ENCODE measurements at regions of chr19 and their contacts with region 1.

Region 1: DNA sequence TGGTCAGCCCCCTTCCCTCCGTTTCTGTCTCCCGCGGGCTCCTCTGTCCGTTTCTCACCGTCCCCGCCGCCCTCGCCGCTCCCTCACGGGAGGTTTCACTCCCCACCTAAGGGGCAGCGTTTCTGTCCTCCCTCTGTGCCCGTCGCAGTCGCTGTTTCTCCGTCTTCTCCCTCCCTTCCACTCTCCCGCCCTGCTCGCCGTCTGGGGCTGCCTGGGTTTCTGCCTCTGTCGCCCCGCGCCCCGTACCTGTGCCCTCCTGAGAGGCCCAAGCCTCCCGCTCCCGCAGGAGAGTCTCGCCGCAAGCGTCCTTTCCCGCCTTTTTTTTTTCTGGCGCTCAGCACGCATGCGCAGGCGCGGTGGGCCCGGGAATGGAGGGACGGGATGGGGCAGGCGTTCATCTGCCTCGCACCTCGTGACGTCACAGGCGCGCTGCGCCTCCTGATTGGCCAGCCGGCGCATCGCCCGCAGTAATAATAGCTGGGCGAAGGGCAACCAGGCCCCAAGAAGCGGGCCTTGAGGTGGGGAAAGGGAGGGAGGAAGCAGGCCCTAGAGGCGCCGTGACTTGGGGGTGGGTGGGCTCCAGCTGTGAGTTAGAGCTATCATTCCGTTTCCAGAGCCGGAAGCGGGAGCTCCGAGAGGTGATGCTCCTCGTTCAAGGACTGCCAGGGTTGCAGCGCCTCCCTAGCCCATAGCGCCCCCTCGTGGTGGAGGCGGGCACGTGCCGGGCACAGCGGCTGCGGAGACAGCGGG is 15.4 kb downstream of the SSC5D start:
- DNase-seq: peak; percentile 97
- ATAC-seq: peak; percentile 95
- H3K4me3 Mint-ChIP-seq: peak overlapping the region; percentile 88
- H3K27ac Mint-ChIP-seq: peak overlapping the region; percentile 91
- H3K4me1 Mint-ChIP-seq: peaks cover 11% of the 10 kb centered on the region
- H3K27me3 Mint-ChIP-seq: peaks cover 3% of the 10 kb centered on the region
- CTCF ChIP-seq: peak; percentile 79

Region 2: DNA sequence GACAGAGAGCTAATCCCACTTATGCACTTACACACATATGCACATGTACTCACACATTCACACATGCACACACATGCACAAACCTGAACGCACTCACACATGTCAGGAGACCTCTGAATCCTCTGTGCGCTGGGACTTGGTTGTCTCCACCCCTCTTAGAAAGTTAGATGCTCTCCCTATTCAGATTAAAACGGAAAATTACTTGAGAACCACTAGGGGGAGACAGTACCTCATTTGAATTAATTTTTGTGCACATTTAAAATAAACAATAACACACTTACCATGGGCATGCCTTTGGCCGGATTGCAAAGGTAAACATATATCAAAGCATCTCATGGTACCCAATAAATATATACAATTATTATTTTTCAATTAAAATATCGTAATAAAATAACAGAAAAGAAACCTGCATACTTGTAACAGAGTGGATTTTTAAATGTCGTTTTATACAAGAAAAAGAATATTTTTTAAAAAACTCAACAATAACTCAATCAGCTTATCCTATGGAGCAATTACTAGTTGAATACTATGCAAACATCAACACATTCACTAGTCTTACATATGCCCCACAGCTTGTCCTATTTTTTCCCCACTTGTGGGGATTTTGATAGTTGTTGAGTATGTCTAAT is 850.4 kb before region 1 on chr19:
- CTCF ChIA-PET with region 1: no interaction called
- POLR2A ChIA-PET with region 1: no interaction called
- intact Hi-C with region 1: loop called (anchors 10 kb)
- DNase-seq: no peak
- ATAC-seq: peak; percentile 42
- H3K4me3 Mint-ChIP-seq: no peak overlapping the region
- H3K27ac Mint-ChIP-seq: no peak overlapping the region
- H3K4me1 Mint-ChIP-seq: peaks cover 12% of the 10 kb centered on the region
- H3K27me3 Mint-ChIP-seq: no peaks in the 10 kb centered on the region
- CTCF ChIP-seq: peak; percentile 88

Region 3: GRCh38 chr19:54817670-54818536 is 685.8 kb before region 1 on chr19:
- CTCF ChIA-PET with region 1: no interaction called
- POLR2A ChIA-PET with region 1: no interaction called
- intact Hi-C with region 1: no loop called
- DNase-seq: no peak
- ATAC-seq: no peak
- H3K4me3 Mint-ChIP-seq: no peak overlapping the region
- H3K27ac Mint-ChIP-seq: no peak overlapping the region
- H3K4me1 Mint-ChIP-seq: no peaks in the 10 kb centered on the region
- H3K27me3 Mint-ChIP-seq: peaks cover 22% of the 10 kb centered on the region
- CTCF ChIP-seq: no peak

Region 4: DNA sequence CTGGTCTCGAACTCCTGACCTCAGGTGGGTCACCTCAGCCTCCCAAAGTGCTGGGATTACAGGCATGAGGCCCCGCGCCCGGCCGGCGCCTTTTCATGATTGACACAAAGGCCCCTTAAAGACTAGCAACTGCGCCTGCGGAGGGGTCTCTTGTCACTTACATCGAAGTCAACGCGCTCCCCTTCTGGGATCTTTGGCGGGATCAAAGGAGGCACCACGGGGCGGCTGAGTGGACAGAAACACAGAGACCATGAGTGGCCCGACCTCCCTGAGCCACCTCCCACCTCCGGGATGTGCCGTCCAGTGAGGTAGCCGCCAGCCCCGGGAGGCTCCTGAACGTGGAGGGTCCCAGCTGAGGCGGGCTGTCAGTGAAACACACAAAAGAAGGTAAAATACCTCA is 362.0 kb before region 1 on chr19:
- CTCF ChIA-PET with region 1: interaction called, 82 read pairs
- POLR2A ChIA-PET with region 1: interaction called, 8 read pairs
- intact Hi-C with region 1: loop called (anchors 1 kb)
- DNase-seq: no peak
- ATAC-seq: no peak
- H3K4me3 Mint-ChIP-seq: no peak overlapping the region
- H3K27ac Mint-ChIP-seq: no peak overlapping the region
- H3K4me1 Mint-ChIP-seq: peaks cover 6% of the 10 kb centered on the region
- H3K27me3 Mint-ChIP-seq: peaks cover 51% of the 10 kb centered on the region
- CTCF ChIP-seq: no peak

Region 5: DNA sequence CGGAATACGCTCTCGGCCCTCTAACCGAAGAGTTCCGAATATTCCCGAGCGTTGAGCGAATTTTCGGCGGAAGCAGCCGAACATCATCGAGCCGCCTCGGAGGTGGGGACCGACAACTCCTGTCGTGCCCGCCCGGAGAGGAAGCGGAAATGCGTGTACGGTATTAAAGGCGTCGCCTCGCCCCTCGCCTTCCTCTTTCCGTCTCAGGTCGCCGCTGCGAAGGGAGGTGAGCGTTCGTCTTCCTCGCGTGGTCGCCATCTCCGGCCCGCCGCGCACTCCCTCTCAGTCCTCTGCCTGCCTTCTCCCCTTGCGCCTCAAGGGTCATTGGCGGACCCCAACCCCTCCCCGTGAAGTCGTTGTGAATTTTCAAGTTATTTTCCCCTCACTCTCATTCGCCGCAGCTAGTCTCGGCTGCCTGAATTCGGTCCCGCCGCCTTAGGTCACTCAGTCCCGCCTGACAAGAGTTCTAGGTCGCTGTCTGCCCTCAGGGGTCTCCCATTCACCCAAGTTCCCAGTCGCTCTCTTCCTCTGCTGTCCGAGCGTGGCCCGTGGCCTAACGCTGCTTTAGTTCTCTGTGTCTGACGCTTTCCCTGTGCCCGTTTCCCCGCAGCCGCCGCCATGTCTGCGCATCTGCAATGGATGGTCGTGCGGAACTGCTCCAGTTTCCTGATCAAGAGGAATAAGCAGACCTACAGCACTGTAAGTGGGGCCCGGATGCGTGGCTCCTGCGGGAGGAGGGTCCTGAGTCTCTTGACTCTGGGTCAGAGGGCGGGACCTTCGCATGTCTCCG is 117.7 kb before region 1 on chr19 and contains the start of gene RPL28:
- CTCF ChIA-PET with region 1: interaction called, 18 read pairs
- POLR2A ChIA-PET with region 1: interaction called, 7 read pairs
- intact Hi-C with region 1: loop called (anchors 1 kb)
- DNase-seq: peak; percentile 95
- ATAC-seq: peak; percentile 79
- H3K4me3 Mint-ChIP-seq: peak within 1 kb of the TSS; percentile 100
- H3K27ac Mint-ChIP-seq: peak within 1 kb of the TSS; percentile 99
- H3K4me1 Mint-ChIP-seq: peaks cover 67% of the 10 kb centered on the region
- H3K27me3 Mint-ChIP-seq: no peaks in the 10 kb centered on the region
- CTCF ChIP-seq: no peak
- total RNA-seq, gene RPL28: 3,790 and 4,042 TPM in 2 replicates

Region 6: DNA sequence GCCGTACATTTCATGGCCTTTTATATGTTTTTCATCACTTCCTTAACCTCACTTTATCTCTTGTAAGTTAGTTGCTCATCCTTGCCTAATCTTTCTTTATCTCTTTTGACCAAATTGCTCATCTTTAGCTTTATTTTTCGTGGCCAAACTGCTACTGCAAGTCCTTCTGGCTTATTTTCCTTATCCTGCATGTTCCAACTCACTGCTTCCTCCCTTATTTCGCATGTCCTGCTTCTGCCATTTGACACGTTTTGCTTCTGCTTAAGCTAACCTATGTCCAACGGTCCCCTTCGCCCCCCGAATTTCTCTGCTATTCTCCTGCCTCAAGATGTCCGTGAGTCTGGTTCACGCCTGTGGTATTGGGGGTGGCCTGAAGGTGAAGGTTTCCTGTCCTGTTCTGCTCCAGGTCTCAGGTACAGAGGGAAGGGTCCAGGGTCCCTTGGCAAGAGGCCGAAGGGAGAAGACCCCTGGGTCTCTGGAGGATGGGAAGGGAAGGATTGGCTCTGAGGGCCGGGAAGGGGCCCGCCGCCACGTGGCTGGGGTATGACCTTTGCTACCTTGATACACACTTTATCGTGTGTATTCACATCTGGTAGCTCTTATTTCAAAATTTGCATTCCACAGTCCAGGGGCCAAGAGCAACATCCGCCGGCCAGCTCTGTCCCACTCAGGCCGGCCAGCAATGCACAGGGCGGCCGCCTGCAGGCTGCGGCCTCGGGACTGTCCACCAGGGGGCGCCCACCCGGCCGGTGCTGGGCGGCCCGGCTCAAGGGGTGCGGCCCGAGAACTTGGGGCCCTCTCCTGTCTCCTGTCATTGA is 36.2 kb before region 1 on chr19:
- CTCF ChIA-PET with region 1: interaction called, 50 read pairs
- POLR2A ChIA-PET with region 1: interaction called, 11 read pairs
- intact Hi-C with region 1: loop called (anchors 1 kb)
- DNase-seq: peak; percentile 73
- ATAC-seq: peak; percentile 99
- H3K4me3 Mint-ChIP-seq: no peak overlapping the region
- H3K27ac Mint-ChIP-seq: no peak overlapping the region
- H3K4me1 Mint-ChIP-seq: peaks cover 3% of the 10 kb centered on the region
- H3K27me3 Mint-ChIP-seq: no peaks in the 10 kb centered on the region
- CTCF ChIP-seq: peak; percentile 96

Measured in activated B cell treated with CpG ODN at 0.5 μM for 24 hours (primary cell).